SK-MEL-5 (cell line): ENCODE measurements at regions of chr17 and their contacts with region 1.

Region 1: DNA sequence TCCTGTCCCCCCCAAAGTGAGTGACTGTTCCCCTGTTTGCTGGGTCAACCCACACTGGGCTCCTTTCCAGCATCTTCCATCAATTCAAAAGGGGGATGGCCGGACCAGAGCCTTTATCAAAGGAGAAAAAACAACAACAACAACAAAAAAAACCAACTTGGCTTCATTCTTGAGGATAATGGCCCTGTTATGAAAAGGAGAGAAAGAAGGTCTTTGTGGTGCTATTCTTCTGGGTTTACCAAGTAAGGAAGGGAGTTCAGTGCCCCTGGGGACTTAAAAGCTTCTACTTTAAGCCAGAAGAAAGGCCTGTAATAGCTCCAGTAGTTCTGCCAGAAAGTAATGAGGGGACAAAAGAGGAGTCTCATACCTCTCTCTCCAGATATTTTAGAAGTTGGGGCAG is 71.5 kb downstream of the RGS9 start:
- DNase-seq: peak; percentile 89

Region 2: GRCh38 chr17:65109990-65110680 is 98.6 kb before region 1 on chr17:
- in situ Hi-C with region 1: loop called (anchors 5 kb)
- DNase-seq: no peak

Region 3: DNA sequence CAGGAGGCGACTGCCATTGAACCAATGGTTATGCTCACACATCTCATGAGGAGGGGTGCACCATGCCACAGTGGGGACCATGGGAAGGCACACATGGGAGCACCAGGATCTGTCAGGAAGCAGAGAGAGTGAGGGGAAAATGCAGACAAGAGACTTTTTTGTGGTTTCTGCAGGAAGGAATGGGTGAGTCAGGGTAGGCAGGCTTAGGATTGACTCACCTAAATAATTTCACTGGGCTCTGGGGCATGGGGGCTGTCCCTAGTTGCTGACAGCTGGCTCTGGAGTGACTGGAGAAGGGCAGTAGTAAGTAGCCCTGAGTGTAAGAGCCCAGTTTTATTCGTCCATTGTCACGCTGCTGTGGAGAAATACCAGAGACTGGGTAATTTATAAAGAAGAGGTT is 150.3 kb after region 1 on chr17:
- in situ Hi-C with region 1: no loop called
- DNase-seq: no peak